CD14-positive monocyte (primary cell): ENCODE measurements at regions of chr21 and their contacts with region 1.

Region 1: DNA sequence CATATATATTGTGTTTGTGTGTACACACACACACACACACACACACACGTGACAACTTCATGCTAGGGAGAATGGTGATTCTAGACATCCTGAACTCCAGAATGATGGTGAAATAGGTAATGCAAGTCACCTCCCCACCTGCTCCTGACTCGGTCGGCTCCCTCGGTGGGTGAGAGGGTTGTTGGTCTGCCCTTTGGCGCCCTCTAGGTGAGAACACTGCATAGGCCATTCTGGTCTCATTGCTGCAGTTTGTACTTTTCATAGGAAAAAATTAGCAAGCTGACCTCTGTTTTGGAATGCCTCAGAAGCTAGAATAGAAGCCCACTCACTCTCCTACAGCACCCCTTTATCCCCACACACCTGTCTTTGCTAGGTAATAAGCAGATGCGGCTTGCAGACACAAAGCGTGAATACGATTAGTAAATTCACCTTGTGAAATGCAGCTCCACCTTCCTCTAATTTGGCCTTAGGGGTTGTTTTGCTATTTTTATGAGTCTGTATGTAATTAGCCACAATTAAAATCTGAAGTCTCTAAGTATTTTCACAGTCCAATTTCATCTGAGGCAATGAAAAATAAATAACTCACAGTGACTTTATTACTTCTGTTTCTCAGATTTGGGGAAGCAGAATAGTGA is 130.0 kb upstream of the KCNJ15 start:
- DNase-seq: peak; percentile 13 to 36 (median 35)
- H3K4me3 ChIP-seq: no peak overlapping the region
- H3K4me3 Mint-ChIP-seq: no peak overlapping the region
- H3K27ac ChIP-seq: no peak overlapping the region
- H3K27ac Mint-ChIP-seq: peak overlapping the region in 1 of 7 donors; percentile 68
- H3K4me1 ChIP-seq: no peaks in the 10 kb centered on the region
- H3K4me1 Mint-ChIP-seq: peaks cover 1% of the 10 kb centered on the region
- H3K27me3 ChIP-seq: peaks cover 2 to 3% of the 10 kb centered on the region in 2 donors
- H3K27me3 Mint-ChIP-seq: peaks cover 7 to 11% (median 8%) of the 10 kb centered on the region in 3 donors
- CTCF ChIP-seq: peak; percentile 77

Region 2: GRCh38 chr21:37700641-37701202 is 426.1 kb before region 1 on chr21:
- intact Hi-C with region 1: loop called in 1 of 2 experiments (anchors 10 kb)
- DNase-seq: peak; percentile 34 to 61 (median 55)
- H3K4me3 ChIP-seq: no peak overlapping the region
- H3K4me3 Mint-ChIP-seq: no peak overlapping the region
- H3K27ac ChIP-seq: no peak overlapping the region
- H3K27ac Mint-ChIP-seq: no peak overlapping the region
- H3K4me1 ChIP-seq: no peaks in the 10 kb centered on the region
- H3K4me1 Mint-ChIP-seq: no peaks in the 10 kb centered on the region
- H3K27me3 ChIP-seq: no peaks in the 10 kb centered on the region
- H3K27me3 Mint-ChIP-seq: peaks cover 2 to 9% (median 2%) of the 10 kb centered on the region in 3 donors
- CTCF ChIP-seq: peak; percentile 81

Region 3: GRCh38 chr21:37711836-37712568 is 414.8 kb before region 1 on chr21:
- intact Hi-C with region 1: loop called (anchors 5 to 10 kb)
- DNase-seq: peak; percentile 33 to 56 (median 54)
- H3K4me3 ChIP-seq: no peak overlapping the region
- H3K4me3 Mint-ChIP-seq: no peak overlapping the region
- H3K27ac ChIP-seq: no peak overlapping the region
- H3K27ac Mint-ChIP-seq: no peak overlapping the region
- H3K4me1 ChIP-seq: no peaks in the 10 kb centered on the region
- H3K4me1 Mint-ChIP-seq: no peaks in the 10 kb centered on the region
- H3K27me3 ChIP-seq: peaks cover 2 to 4% of the 10 kb centered on the region in 2 donors
- H3K27me3 Mint-ChIP-seq: peaks cover 6 to 21% (median 8%) of the 10 kb centered on the region in 3 donors
- CTCF ChIP-seq: peak; percentile 80

Region 4: DNA sequence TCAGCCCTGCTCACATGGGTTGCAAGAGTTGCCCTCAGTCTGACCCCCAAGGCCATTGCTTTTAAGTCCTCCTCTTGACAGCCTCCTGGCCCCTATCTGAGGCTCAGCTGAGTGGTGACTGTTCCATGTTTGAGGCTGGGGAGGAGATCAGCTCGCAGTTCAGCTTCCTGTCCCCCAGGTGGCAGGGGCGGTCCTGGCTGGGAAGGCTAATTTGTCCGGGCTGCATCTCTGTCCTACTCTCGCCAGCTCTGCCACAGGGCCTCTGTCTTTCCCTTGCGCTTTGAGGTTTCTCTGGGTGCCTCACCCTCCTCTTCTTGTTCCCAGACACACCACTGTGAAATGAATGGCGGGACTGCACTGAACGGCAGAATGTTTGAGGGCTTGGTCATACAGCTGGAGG is 367.8 kb before region 1 on chr21:
- intact Hi-C with region 1: loop called in 1 of 2 experiments (anchors 2 kb)
- DNase-seq: peak; percentile 15 to 41 (median 35)
- H3K4me3 ChIP-seq: no peak overlapping the region
- H3K4me3 Mint-ChIP-seq: no peak overlapping the region
- H3K27ac ChIP-seq: no peak overlapping the region
- H3K27ac Mint-ChIP-seq: no peak overlapping the region
- H3K4me1 ChIP-seq: no peaks in the 10 kb centered on the region
- H3K4me1 Mint-ChIP-seq: no peaks in the 10 kb centered on the region
- H3K27me3 ChIP-seq: no peaks in the 10 kb centered on the region
- H3K27me3 Mint-ChIP-seq: peaks cover 0 to 6% (median 3%) of the 10 kb centered on the region in 3 donors
- CTCF ChIP-seq: peak; percentile 71